ENCODE measurements at regions of chr12 and their contacts with region 1.

Region 1: GRCh38 chr12:111396726-111397445 is 8.8 kb upstream of the SH2B3 start:
- DNase-seq: peak; percentile 98
- H3K4me3 ChIP-seq: peak overlapping the region in 6 of 8 donors; percentile 17 to 59 (median 24)
- H3K27ac ChIP-seq: peak overlapping the region in 7 of 8 donors; percentile 39 to 75 (median 65)
- H3K4me1 ChIP-seq: peaks cover 20 to 70% (median 38%) of the 10 kb centered on the region in 6 donors
- H3K27me3 ChIP-seq: no peaks in the 10 kb centered on the region
- CTCF ChIP-seq: peak; percentile 93 to 100 (median 99)
- POLR2A ChIP-seq: no peak

Region 2: GRCh38 chr12:111445726-111446581 is 49.1 kb after region 1 on chr12:
- intact Hi-C with region 1: loop called (anchors 2 kb)
- DNase-seq: no peak
- H3K4me3 ChIP-seq: peak overlapping the region in 1 of 8 donors; percentile 39
- H3K27ac ChIP-seq: peak overlapping the region; percentile 74 to 95 (median 84)
- H3K4me1 ChIP-seq: peaks cover 78 to 100% (median 100%) of the 10 kb centered on the region in 6 donors
- H3K27me3 ChIP-seq: no peaks in the 10 kb centered on the region
- CTCF ChIP-seq: no peak
- POLR2A ChIP-seq: no peak

Region 3: GRCh38 chr12:111529424-111530368 is 132.8 kb after region 1 on chr12:
- intact Hi-C with region 1: loop called (anchors 5 kb)
- DNase-seq: no peak
- H3K4me3 ChIP-seq: no peak overlapping the region
- H3K27ac ChIP-seq: no peak overlapping the region
- H3K4me1 ChIP-seq: peaks cover 0 to 13% (median 0%) of the 10 kb centered on the region in 6 donors
- H3K27me3 ChIP-seq: no peaks in the 10 kb centered on the region
- CTCF ChIP-seq: peak in 10 of 11 experiments; percentile 34 to 77 (median 64)
- POLR2A ChIP-seq: no peak

Region 4: GRCh38 chr12:111664961-111665865 is 268.3 kb after region 1 on chr12:
- intact Hi-C with region 1: no loop called
- DNase-seq: no peak
- H3K4me3 ChIP-seq: no peak overlapping the region
- H3K27ac ChIP-seq: peak overlapping the region in 4 of 8 donors; percentile 9 to 31 (median 24)
- H3K4me1 ChIP-seq: no peaks in the 10 kb centered on the region
- H3K27me3 ChIP-seq: no peaks in the 10 kb centered on the region
- CTCF ChIP-seq: no peak
- POLR2A ChIP-seq: no peak

Region 5: DNA sequence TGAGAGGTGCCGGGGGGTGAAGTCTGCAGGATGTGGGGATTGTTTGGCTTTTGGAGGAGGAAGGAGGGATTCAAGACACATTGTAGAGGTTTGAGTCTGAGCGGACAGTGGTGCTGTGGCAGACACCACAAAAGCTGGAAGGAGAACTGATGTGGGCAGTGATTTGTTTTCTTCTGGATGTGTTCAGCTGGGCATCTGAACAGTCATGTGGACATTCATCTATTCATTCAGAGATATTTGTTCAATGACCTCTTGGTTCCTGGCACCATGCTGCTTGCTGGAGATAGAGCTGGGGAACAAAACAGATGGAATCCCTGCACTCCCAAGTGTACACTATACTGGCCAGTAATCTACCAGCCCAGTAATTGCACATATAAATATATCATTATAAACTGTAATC is 1085.8 kb after region 1 on chr12:
- intact Hi-C with region 1: no loop called
- DNase-seq: no peak
- H3K4me3 ChIP-seq: no peak overlapping the region
- H3K27ac ChIP-seq: no peak overlapping the region
- H3K4me1 ChIP-seq: no peaks in the 10 kb centered on the region
- H3K27me3 ChIP-seq: no peaks in the 10 kb centered on the region
- CTCF ChIP-seq: no peak
- POLR2A ChIP-seq: no peak

Measured in spleen (tissue), 13 donors.